Endothelial cell of umbilical vein (primary cell): ENCODE measurements at regions of chr3 and their contacts with region 1.

Region 1: DNA sequence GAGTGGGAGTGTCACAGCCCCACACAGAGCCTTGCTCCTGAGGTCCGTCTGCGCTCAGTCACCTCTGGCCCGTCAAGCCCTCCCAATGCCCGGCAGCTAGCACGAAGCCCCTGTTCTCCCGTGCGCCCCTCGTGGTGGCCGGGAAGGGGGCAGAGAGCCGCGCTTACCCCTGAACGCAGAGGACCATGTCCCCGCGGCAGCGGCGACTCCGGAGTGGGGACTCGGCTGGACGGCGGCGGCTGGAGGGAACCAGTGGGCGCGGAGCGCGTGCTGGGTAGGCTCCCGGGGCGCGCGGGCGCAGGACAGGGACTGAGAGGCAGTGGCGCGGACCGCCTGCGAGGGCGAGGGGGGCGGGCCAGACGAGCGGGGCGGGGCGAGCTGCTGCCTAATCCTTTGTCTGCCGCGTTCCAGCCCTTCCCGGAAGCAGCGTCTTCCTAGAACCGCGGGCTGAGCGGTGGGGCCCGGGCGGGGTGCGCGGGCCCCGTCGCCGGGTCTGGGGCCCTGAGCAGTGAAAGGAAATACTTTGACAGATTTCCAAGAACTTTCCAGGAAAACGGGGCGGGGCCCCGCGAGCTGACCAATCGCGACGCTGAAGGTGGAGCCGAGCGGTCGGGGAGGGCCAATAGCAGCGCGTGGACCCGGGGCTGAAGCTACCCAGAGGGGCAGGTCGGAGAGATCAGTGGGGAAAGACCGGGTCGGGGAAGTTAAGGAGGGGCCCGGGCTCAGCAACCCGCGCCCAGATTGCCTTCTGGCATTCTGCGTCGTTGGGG is at the start of gene CISH:
- DNase-seq: peak; percentile 96
- H3K4me3 ChIP-seq: peak within 1 kb of the TSS; percentile 9 to 51 (median 50)
- H3K27ac ChIP-seq: peak within 1 kb of the TSS; percentile 50
- H3K4me1 ChIP-seq: peaks cover 21% of the 10 kb centered on the region
- H3K27me3 ChIP-seq: no peaks in the 10 kb centered on the region
- CTCF ChIP-seq: peak; percentile 50 to 79
- POLR2A ChIP-seq: no peak
- total RNA-seq, gene CISH: 2.2 and 2.5 TPM in 2 replicates

Region 2: GRCh38 chr3:50350527-50351322 is 260.9 kb before region 1 on chr3 and contains the starts of genes CYB561D2 and NPRL2:
- CTCF ChIA-PET with region 1: interaction called, 5 read pairs
- POLR2A ChIA-PET with region 1: no interaction called
- dilution Hi-C with region 1: no loop called
- intact Hi-C with region 1: loop called (anchors 1 kb)
- DNase-seq: peak; percentile 95
- H3K4me3 ChIP-seq: peak within 1 kb of the TSS; percentile 19 to 77 (median 40)
- H3K27ac ChIP-seq: no peak within 1 kb of the TSS
- H3K4me1 ChIP-seq: peaks cover 16% of the 10 kb centered on the region
- H3K27me3 ChIP-seq: no peaks in the 10 kb centered on the region
- CTCF ChIP-seq: no peak
- POLR2A ChIP-seq: peak; percentile 80
- total RNA-seq, gene CYB561D2: 13.6 and 16.3 TPM in 2 replicates
- total RNA-seq, gene NPRL2: 13.4 and 14.5 TPM in 2 replicates

Region 3: DNA sequence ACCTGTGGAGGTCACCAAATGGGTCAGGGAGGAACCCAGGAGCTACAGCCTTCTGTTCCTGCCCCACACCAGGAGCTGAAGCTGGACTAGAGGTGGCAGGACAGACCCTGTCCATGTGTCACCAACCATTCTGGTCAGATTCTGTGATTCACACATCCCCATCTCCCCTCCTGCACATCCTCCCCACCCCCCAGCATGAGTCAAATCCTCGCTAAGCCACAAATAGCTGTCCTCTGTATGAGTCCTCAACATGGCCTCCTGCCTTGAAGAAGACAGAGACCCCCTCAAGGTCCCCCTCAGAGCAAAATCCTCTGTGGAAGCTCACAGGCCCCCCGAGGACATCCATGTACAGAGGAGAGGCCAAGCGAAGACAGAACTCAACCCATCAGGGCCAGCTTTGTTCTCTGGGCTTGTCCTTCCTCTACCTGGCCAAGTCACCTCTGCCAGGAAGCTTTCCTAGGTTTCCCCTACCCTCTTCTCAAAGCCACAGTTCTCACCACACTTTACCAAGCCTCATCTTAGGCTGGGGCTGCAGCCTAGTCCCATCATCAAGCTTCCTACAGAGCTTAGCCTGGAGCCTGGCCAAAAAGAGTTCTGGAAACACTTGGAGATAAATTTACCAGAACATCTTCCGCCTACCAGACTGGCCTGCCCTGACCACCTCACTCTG is 125.3 kb before region 1 on chr3:
- CTCF ChIA-PET with region 1: no interaction called
- POLR2A ChIA-PET with region 1: no interaction called
- dilution Hi-C with region 1: no loop called
- intact Hi-C with region 1: no loop called
- DNase-seq: no peak
- H3K4me3 ChIP-seq: no peak overlapping the region
- H3K27ac ChIP-seq: no peak overlapping the region
- H3K4me1 ChIP-seq: no peaks in the 10 kb centered on the region
- H3K27me3 ChIP-seq: no peaks in the 10 kb centered on the region
- CTCF ChIP-seq: no peak
- POLR2A ChIP-seq: no peak

Region 4: DNA sequence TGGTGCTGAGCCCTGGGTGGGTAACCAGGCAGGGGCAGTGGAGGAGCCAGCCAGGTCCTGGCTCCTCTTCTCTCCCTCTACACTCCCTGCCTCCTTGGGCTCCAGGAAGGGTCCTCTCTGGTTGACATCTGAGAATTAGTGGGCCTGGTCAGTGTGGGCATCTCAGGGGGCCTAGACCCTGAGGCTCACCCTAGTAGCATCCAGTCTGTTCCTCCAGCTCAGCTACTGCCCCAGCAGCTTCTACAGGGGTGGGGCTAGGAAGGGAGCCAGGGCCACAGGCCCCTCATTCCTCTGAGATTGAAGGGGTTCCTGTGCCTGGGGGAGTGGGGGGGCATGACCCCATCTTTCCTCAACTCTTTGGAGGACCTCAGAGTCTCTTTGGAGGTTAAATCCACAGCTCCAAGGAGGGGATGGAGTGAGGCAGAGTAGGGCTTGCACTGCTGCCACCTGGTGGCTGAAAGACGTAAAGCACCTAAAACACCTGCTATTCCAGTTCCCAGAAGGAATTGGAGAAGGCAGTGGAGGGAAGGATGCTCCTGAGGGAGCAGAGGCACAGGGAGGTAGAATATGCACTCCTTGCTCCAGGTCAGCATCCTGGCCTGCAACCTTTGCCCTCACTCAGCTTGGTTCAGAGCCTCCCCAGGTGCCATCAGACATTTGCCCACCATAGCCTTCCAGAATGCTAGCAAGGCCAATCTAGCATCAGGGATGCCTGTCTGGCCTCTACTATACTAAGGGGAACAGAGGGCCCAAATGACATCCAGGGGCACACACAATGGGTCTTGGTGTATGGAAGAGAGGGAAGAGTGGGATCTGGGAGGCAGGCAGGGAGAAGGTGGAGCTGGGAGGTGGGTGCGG is 69.2 kb before region 1 on chr3:
- CTCF ChIA-PET with region 1: interaction called, 4 read pairs
- POLR2A ChIA-PET with region 1: no interaction called
- dilution Hi-C with region 1: no loop called
- intact Hi-C with region 1: loop called (anchors 1 kb)
- DNase-seq: peak; percentile 63
- H3K4me3 ChIP-seq: no peak overlapping the region
- H3K27ac ChIP-seq: no peak overlapping the region
- H3K4me1 ChIP-seq: no peaks in the 10 kb centered on the region
- H3K27me3 ChIP-seq: peaks cover 3 to 5% of the 10 kb centered on the region in 2 experiments
- CTCF ChIP-seq: peak; percentile 83 to 87
- POLR2A ChIP-seq: no peak

Region 5: DNA sequence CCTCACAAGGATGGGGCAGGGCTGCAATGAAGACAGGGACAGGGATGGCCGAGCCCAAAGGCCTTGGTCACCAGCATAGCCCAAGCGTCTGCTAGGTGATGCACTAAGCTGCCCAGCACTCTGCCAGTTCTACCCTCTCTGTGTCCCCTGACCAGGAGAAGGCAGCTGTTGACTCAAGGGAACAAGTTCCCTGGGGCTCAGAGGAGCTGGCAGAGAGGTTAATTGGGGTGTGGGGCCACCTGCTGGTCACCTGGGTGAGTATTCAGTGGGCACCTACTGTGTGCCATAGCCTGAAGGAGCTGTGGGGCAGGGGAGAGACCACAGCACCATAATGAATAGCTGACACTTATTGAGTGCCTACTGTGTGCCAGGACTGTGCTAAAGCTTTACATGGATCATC is 41.1 kb after region 1 on chr3:
- CTCF ChIA-PET with region 1: interaction called, 65 read pairs
- POLR2A ChIA-PET with region 1: no interaction called
- dilution Hi-C with region 1: no loop called
- intact Hi-C with region 1: loop called (anchors 1 kb)
- DNase-seq: peak; percentile 17
- H3K4me3 ChIP-seq: no peak overlapping the region
- H3K27ac ChIP-seq: no peak overlapping the region
- H3K4me1 ChIP-seq: no peaks in the 10 kb centered on the region
- H3K27me3 ChIP-seq: no peaks in the 10 kb centered on the region
- CTCF ChIP-seq: peak; percentile 19 to 37
- POLR2A ChIP-seq: no peak

Region 6: GRCh38 chr3:51311055-51311454 is 699.4 kb after region 1 on chr3:
- CTCF ChIA-PET with region 1: interaction called, 37 read pairs
- POLR2A ChIA-PET with region 1: no interaction called
- dilution Hi-C with region 1: no loop called
- intact Hi-C with region 1: no loop called
- DNase-seq: peak; percentile 31
- H3K4me3 ChIP-seq: no peak overlapping the region
- H3K27ac ChIP-seq: no peak overlapping the region
- H3K4me1 ChIP-seq: no peaks in the 10 kb centered on the region
- H3K27me3 ChIP-seq: no peaks in the 10 kb centered on the region
- CTCF ChIP-seq: peak in 1 of 2 donors; percentile 32
- POLR2A ChIP-seq: no peak

Region 7: DNA sequence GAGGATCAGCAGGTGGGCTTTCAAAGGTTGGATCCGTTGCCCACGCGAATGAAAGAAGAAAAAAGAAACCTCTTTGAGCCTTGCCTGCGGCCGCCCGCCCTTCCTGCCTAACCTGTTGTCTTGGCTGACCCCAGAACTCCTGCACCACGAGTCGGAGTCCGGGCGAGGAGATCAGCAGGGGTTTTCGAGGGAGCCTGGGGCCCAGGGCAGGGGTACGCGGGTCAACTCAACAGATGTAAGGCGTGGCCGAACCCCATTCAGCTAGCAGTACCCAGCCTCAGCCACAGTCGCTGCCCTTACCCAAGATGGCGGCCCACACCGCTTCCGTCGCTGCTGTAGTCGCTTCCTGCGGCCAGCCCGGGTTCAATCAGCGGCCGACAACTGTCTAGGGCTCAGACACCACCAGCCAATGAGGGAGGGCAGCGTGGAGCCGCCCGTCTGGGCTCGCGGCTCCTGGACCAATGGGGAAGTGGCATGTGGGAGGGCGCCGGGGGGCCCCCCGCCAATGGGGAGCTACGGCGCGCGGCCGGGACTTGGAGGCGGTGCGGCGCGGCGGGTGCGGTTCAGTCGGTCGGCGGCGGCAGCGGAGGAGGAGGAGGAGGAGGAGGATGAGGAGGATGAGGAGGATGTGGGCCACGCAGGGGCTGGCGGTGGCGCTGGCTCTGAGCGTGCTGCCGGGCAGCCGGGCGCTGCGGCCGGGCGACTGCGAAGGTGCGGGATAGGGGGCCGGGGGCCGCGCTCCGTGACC is 773.3 kb after region 1 on chr3 and contains the start of gene MANF:
- CTCF ChIA-PET with region 1: interaction called, 20 read pairs
- POLR2A ChIA-PET with region 1: no interaction called
- dilution Hi-C with region 1: no loop called
- intact Hi-C with region 1: loop called (anchors 1 kb)
- DNase-seq: peak; percentile 99
- H3K4me3 ChIP-seq: peak within 1 kb of the TSS; percentile 64 to 97 (median 93)
- H3K27ac ChIP-seq: peak within 1 kb of the TSS; percentile 95
- H3K4me1 ChIP-seq: peaks cover 29% of the 10 kb centered on the region
- H3K27me3 ChIP-seq: no peaks in the 10 kb centered on the region
- CTCF ChIP-seq: no peak
- POLR2A ChIP-seq: peak; percentile 89
- total RNA-seq, gene MANF: 248 and 254 TPM in 2 replicates

Region 8: GRCh38 chr3:51498876-51499738 is 887.5 kb after region 1 on chr3:
- CTCF ChIA-PET with region 1: interaction called, 5 read pairs
- POLR2A ChIA-PET with region 1: no interaction called
- dilution Hi-C with region 1: no loop called
- intact Hi-C with region 1: loop called (anchors 5 kb)
- DNase-seq: peak; percentile 96
- H3K4me3 ChIP-seq: peak overlapping the region; percentile 66 to 97 (median 94)
- H3K27ac ChIP-seq: peak overlapping the region; percentile 63
- H3K4me1 ChIP-seq: peaks cover 8% of the 10 kb centered on the region
- H3K27me3 ChIP-seq: no peaks in the 10 kb centered on the region
- CTCF ChIP-seq: no peak
- POLR2A ChIP-seq: peak; percentile 4